ENCODE measurements at regions of chr2 and their contacts with region 1.

Region 1: GRCh38 chr2:27303093-27304025 is 4.9 kb downstream of the UCN start:
- DNase-seq: peak; percentile 85
- H3K4me3 ChIP-seq: peak overlapping the region in 1 of 2 experiments; percentile 24; a peak in 1 of 4 replicates
- H3K27ac ChIP-seq: no peak overlapping the region
- H3K4me1 ChIP-seq: peaks cover 0 to 15% of the 10 kb centered on the region in 2 experiments; a peak in 1 of 4 replicates
- H3K27me3 ChIP-seq: peaks cover 15% of the 10 kb centered on the region; the same call in 1 of the 2 replicates
- CTCF ChIP-seq: peak; percentile 99
- EP300 ChIP-seq: no peak
- RAD21 ChIP-seq: peak; percentile 79

Region 2: GRCh38 chr2:26652361-26653041 is 650.9 kb before region 1 on chr2:
- CTCF ChIA-PET with region 1: no interaction called
- POLR2A ChIA-PET with region 1: no interaction called
- DNase-seq: peak; percentile 92
- H3K4me3 ChIP-seq: no peak overlapping the region
- H3K27ac ChIP-seq: peak overlapping the region in 1 of 2 experiments; percentile 82; a peak in 2 of 4 replicates
- H3K4me1 ChIP-seq: peaks cover 0 to 32% of the 10 kb centered on the region in 2 experiments; a peak in 2 of 4 replicates
- H3K27me3 ChIP-seq: peaks cover 17% of the 10 kb centered on the region; the same call in 1 of the 2 replicates
- CTCF ChIP-seq: no peak
- EP300 ChIP-seq: no peak; a peak in 1 of 4 replicates
- RAD21 ChIP-seq: no peak

Region 3: DNA sequence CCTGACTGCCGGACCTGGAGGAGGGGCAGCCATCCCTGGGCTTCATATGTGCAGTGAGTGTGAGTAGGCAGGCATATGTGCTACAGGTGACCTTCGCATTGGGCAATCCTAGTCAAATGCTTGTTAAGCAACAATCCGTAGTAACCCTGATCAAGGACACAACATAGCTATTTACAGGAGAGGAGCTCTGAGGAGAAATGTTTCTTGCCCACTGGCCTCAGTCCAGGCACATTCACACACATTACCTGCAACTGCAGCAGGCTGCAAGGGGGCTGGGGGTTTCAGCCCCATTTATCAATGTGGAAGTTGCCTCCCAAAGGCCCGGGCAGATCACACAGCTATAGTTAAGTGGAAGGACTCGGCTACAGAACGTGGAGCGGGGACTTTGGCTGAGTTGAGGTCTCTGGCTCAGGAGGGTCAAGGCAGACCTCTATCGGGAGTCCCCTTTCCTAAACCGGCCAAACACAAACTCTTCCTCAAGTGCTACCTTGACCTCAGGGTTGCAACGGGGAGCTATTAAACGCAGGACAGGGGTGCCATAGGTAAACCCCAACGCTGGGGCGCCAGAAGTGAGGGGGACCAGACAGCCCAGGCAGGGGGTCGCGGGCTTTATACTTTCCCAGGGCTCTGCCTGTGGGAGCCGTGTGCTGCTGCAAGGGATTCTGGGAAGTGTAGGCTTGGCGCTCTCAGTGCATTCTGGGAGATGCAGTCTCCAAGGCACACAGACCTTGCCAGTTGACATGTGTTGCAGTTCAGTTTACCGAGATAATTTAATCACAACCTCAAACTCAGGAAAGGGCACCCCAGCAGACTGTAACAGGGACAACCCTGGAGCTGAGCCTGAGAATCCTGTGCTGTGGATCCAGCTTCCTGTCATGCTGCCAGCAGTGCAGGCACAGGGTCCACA is 207.4 kb before region 1 on chr2:
- CTCF ChIA-PET with region 1: interaction called, 57 read pairs
- POLR2A ChIA-PET with region 1: interaction called, 3 read pairs
- DNase-seq: peak; percentile 91
- H3K4me3 ChIP-seq: peak overlapping the region in 1 of 2 experiments; percentile 43; a peak in 2 of 4 replicates
- H3K27ac ChIP-seq: peak overlapping the region in 1 of 2 experiments; percentile 92; a peak in 2 of 4 replicates
- H3K4me1 ChIP-seq: peaks cover 4 to 21% of the 10 kb centered on the region in 2 experiments; a peak in 2 of 4 replicates
- H3K27me3 ChIP-seq: no peaks in the 10 kb centered on the region
- CTCF ChIP-seq: no peak
- EP300 ChIP-seq: no peak
- RAD21 ChIP-seq: peak; percentile 35

Region 4: DNA sequence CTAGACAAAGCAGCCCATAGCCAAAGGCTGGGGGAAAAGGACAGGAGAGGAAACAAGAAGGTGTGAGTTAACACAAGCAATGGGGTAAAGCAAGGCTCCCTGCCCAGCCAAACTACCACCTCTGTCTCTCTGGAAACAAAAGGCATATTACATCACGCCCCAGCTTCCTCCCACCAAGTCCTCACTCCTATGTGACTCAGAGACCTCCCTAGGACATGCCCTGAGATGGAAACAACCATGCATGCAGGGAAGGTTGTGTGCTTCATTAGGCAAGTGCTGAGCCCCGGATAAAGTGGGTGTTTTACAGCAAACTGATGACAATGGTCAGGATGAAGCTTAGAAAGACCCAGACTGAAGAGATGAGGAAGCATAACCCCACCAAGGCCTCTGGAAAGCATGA is 100.5 kb before region 1 on chr2:
- CTCF ChIA-PET with region 1: no interaction called
- POLR2A ChIA-PET with region 1: no interaction called
- DNase-seq: no peak
- H3K4me3 ChIP-seq: no peak overlapping the region
- H3K27ac ChIP-seq: no peak overlapping the region
- H3K4me1 ChIP-seq: no peaks in the 10 kb centered on the region; a peak in 1 of 4 replicates
- H3K27me3 ChIP-seq: no peaks in the 10 kb centered on the region
- CTCF ChIP-seq: no peak
- EP300 ChIP-seq: no peak
- RAD21 ChIP-seq: no peak

Region 5: DNA sequence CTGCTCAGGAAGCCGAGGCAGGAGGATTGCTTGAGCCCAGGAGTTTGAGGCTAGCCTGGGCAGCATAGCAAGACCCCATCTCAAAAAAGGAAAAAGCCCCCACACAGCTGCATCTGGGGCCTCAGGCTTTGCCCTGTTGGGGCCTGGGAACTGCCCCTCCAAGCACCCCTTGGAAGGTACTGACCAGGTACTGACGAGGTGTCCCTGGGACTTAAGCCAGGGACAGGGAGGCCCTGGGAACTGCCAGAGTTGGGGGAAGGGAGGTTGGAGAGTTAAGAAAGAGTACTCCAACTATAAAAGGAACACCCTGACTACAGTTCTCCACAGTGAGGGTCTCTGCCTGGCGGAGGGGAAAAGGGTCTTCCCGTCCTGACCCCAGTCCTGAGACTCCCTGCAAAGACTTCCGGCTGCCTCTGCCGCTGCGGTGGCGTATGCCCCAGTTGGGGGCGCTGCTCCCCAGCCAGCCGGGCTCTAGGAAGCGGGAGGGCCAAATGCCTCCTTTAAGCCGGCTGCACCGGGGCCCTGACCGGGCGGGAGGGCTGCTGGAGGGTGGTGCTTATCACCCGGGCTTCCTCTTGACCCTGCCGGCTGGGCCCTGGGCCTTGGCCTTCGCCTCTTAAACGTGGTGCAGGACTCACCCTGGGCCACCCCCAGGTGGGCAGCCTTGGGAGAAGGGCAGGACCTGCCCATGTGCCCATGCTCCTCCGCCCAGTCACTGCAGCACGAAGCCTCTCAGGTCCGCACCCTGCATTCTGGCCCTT is 53.3 kb before region 1 on chr2:
- CTCF ChIA-PET with region 1: interaction called, 27 read pairs
- POLR2A ChIA-PET with region 1: no interaction called
- DNase-seq: peak; percentile 87
- H3K4me3 ChIP-seq: no peak overlapping the region; a peak in 1 of 4 replicates
- H3K27ac ChIP-seq: no peak overlapping the region
- H3K4me1 ChIP-seq: peaks cover 5 to 12% of the 10 kb centered on the region in 2 experiments; a peak in 3 of 4 replicates
- H3K27me3 ChIP-seq: no peaks in the 10 kb centered on the region
- CTCF ChIP-seq: peak; percentile 66
- EP300 ChIP-seq: no peak
- RAD21 ChIP-seq: peak; percentile 74

Region 6: GRCh38 chr2:27264753-27265535 is 38.4 kb before region 1 on chr2:
- CTCF ChIA-PET with region 1: interaction called, 85 read pairs
- POLR2A ChIA-PET with region 1: no interaction called
- DNase-seq: peak; percentile 100
- H3K4me3 ChIP-seq: peak overlapping the region; percentile 49 to 55
- H3K27ac ChIP-seq: no peak overlapping the region
- H3K4me1 ChIP-seq: peaks cover 6 to 28% of the 10 kb centered on the region in 2 experiments; a peak in 1 of 4 replicates
- H3K27me3 ChIP-seq: peaks cover 86% of the 10 kb centered on the region
- CTCF ChIP-seq: peak; percentile 78
- EP300 ChIP-seq: no peak
- RAD21 ChIP-seq: peak; percentile 58

Region 7: GRCh38 chr2:27291865-27292264 is 11.5 kb before region 1 on chr2:
- CTCF ChIA-PET with region 1: interaction called, 284 read pairs
- POLR2A ChIA-PET with region 1: no interaction called
- DNase-seq: no peak
- H3K4me3 ChIP-seq: no peak overlapping the region
- H3K27ac ChIP-seq: no peak overlapping the region
- H3K4me1 ChIP-seq: peaks cover 2 to 13% of the 10 kb centered on the region in 2 experiments; a peak in 3 of 4 replicates
- H3K27me3 ChIP-seq: no peaks in the 10 kb centered on the region
- CTCF ChIP-seq: peak; percentile 38
- EP300 ChIP-seq: no peak
- RAD21 ChIP-seq: peak; percentile 26

Region 8: GRCh38 chr2:27322766-27323595 is 19.6 kb after region 1 on chr2 and contains the start of gene MPV17:
- CTCF ChIA-PET with region 1: interaction called, 27 read pairs
- POLR2A ChIA-PET with region 1: interaction called, 5 read pairs
- DNase-seq: peak; percentile 98
- H3K4me3 ChIP-seq: peak within 1 kb of the TSS; percentile 76 to 93
- H3K27ac ChIP-seq: peak within 1 kb of the TSS; percentile 90 to 98
- H3K4me1 ChIP-seq: peaks cover 9 to 23% of the 10 kb centered on the region in 2 experiments; a peak in 3 of 4 replicates
- H3K27me3 ChIP-seq: no peaks in the 10 kb centered on the region
- CTCF ChIP-seq: no peak
- EP300 ChIP-seq: no peak
- RAD21 ChIP-seq: no peak
- polyA plus RNA-seq, gene MPV17: 255 and 265 TPM in 2 replicates

Region 9: GRCh38 chr2:27754138-27754588 is 450.8 kb after region 1 on chr2:
- CTCF ChIA-PET with region 1: no interaction called
- POLR2A ChIA-PET with region 1: no interaction called
- DNase-seq: peak; percentile 83
- H3K4me3 ChIP-seq: peak overlapping the region in 1 of 2 experiments; percentile 13; a peak in 1 of 4 replicates
- H3K27ac ChIP-seq: no peak overlapping the region
- H3K4me1 ChIP-seq: no peaks in the 10 kb centered on the region
- H3K27me3 ChIP-seq: no peaks in the 10 kb centered on the region
- CTCF ChIP-seq: peak; percentile 98
- EP300 ChIP-seq: no peak
- RAD21 ChIP-seq: peak; percentile 100

Measured in SK-N-SH (cell line).